Spleen (tissue), 13 donors: ENCODE measurements at regions of chr16 and their contacts with region 1.

Region 1: GRCh38 chr16:47460711-47461597 is at the starts of genes ITFG1 and PHKB:
- DNase-seq: peak; percentile 99
- H3K4me3 ChIP-seq: peak within 1 kb of the TSS; percentile 70 to 98 (median 88)
- H3K27ac ChIP-seq: peak within 1 kb of the TSS; percentile 94 to 100 (median 98)
- H3K4me1 ChIP-seq: peaks cover 28 to 86% (median 76%) of the 10 kb centered on the region in 6 donors
- H3K27me3 ChIP-seq: no peaks in the 10 kb centered on the region
- CTCF ChIP-seq: peak in 10 of 11 experiments; percentile 18 to 48 (median 35)
- POLR2A ChIP-seq: peak in 1 of 3 donors; percentile 53
- total RNA-seq, gene ITFG1: 33.0 to 62.3 (median 56.3) TPM
- total RNA-seq, gene PHKB: 70.0 to 168 (median 115) TPM

Region 2: DNA sequence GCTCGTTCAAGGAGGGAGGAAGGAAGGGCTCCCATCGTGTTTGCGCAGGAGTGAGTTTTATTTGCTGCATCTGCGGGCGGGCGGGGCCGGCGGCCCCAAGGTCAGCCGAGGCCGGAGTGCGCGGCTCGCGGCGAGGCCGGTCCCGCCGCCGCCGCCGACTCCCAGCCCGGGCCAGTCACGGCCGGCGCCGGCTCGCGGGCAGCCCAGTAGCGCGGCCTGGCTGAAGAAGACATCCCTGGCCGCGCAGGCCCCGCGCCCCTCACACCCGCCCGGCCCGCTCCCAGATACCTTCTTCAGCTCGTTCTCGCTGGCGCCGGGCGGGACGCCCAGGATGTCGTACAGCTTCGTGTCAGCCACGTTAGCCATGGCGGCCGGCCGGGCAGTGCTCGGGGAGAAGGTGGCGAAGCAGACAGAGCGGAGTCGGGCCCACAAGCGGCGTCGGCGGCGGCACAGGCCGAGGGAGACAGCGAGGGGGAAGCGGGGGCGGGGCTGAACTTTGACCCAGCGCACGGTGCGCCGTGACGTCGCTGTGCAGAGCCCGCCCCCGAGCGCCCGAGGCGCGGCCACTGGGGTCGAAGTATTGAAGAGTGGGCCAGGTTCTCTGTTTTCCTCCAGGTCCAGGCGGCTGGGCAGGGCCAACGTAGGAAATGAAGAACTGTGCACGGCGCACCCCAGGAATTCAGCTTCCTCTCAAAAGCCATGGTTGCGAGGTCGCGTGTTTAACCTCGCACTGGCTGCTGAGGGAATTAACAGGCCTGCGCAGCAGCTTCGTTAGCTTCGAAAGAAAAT is 487.6 kb before region 1 on chr16 and contains the start of gene DNAJA2:
- intact Hi-C with region 1: loop called (anchors 10 kb)
- DNase-seq: peak; percentile 98
- H3K4me3 ChIP-seq: peak within 1 kb of the TSS; percentile 82 to 94 (median 87)
- H3K27ac ChIP-seq: peak within 1 kb of the TSS; percentile 95 to 99 (median 98)
- H3K4me1 ChIP-seq: peaks cover 30 to 62% (median 46%) of the 10 kb centered on the region in 6 donors
- H3K27me3 ChIP-seq: no peaks in the 10 kb centered on the region
- CTCF ChIP-seq: peak in 5 of 11 experiments; percentile 17 to 35 (median 32)
- POLR2A ChIP-seq: peak; percentile 29 to 78 (median 53)
- total RNA-seq, gene DNAJA2: 45.5 to 61.5 (median 52.1) TPM

Region 3: DNA sequence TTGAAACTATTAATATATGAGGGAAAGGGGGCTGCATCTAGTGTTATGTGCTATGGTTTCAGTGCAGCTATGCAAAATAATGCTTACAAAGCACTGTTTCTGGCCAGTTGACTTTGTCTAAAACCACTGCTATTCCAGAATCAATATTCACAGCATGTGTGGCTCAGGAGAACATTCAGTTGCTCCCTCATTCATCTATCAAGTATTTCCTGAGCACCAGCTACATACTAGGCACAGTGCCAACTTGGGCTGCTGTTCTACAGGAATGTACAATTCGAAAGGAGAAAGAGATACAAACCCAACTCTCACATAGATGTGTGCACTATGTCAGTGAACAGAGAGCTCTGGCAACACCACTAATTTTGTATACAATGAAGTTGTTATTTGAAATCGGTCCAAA is 183.2 kb after region 1 on chr16:
- intact Hi-C with region 1: no loop called
- DNase-seq: no peak
- H3K4me3 ChIP-seq: no peak overlapping the region
- H3K27ac ChIP-seq: no peak overlapping the region
- H3K4me1 ChIP-seq: peaks cover 0 to 22% (median 1%) of the 10 kb centered on the region in 6 donors
- H3K27me3 ChIP-seq: no peaks in the 10 kb centered on the region
- CTCF ChIP-seq: no peak
- POLR2A ChIP-seq: no peak